CD14-positive monocyte (primary cell): ENCODE measurements at regions of chr4 and their contacts with region 1.

Region 1: GRCh38 chr4:146175541-146176453 is at the start of gene LSM6:
- DNase-seq: peak; percentile 61 to 79 (median 76)
- H3K4me3 ChIP-seq: peak within 1 kb of the TSS; percentile 78 to 99 (median 91)
- H3K4me3 Mint-ChIP-seq: peak within 1 kb of the TSS; percentile 92 to 93
- H3K27ac ChIP-seq: peak within 1 kb of the TSS; percentile 81 to 90
- H3K27ac Mint-ChIP-seq: peak within 1 kb of the TSS; percentile 77 to 91 (median 84)
- H3K4me1 ChIP-seq: peaks cover 17 to 33% of the 10 kb centered on the region in 2 donors
- H3K4me1 Mint-ChIP-seq: peaks cover 42% of the 10 kb centered on the region
- H3K27me3 ChIP-seq: no peaks in the 10 kb centered on the region
- H3K27me3 Mint-ChIP-seq: peaks cover 0 to 4% (median 2%) of the 10 kb centered on the region in 3 donors
- CTCF ChIP-seq: peak; percentile 8
- polyA plus RNA-seq, gene LSM6: 41.1 to 89.7 (median 66.2) TPM

Region 2: DNA sequence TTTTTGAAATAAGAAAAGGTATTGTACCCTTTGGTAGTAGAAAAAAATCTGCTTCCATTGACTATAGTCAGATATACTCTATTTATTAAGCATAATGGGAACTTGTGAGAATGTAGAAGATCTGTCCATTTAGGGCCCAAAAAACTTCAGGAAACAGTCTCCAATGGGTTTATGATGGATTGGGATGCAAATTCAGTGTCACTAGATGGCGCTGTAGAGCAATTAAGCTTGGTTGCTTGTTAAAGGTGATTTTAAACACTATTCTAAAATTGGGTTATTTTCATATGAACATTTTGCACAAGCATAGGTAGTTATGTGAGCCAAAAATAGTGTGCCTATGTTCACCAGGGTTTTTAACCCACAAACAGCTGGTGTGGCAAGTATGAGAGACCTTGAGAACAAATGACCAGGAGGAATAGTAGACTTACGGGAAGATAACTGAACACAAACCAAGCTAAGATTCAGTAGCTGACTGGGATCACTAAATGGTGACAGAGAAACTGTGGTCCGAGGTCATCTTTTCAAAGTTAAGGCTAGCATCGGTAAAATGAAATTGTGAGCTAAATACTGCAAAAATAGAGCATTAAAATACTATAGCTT is 80.6 kb before region 1 on chr4:
- intact Hi-C with region 1: loop called in 1 of 2 experiments (anchors 10 kb)
- DNase-seq: peak; percentile 42 to 75 (median 64)
- H3K4me3 ChIP-seq: no peak overlapping the region
- H3K4me3 Mint-ChIP-seq: no peak overlapping the region
- H3K27ac ChIP-seq: no peak overlapping the region
- H3K27ac Mint-ChIP-seq: no peak overlapping the region
- H3K4me1 ChIP-seq: no peaks in the 10 kb centered on the region
- H3K4me1 Mint-ChIP-seq: peaks cover 12% of the 10 kb centered on the region
- H3K27me3 ChIP-seq: peaks cover 0 to 5% of the 10 kb centered on the region in 2 donors
- H3K27me3 Mint-ChIP-seq: peaks cover 3 to 10% (median 9%) of the 10 kb centered on the region in 3 donors
- CTCF ChIP-seq: peak; percentile 96

Region 3: DNA sequence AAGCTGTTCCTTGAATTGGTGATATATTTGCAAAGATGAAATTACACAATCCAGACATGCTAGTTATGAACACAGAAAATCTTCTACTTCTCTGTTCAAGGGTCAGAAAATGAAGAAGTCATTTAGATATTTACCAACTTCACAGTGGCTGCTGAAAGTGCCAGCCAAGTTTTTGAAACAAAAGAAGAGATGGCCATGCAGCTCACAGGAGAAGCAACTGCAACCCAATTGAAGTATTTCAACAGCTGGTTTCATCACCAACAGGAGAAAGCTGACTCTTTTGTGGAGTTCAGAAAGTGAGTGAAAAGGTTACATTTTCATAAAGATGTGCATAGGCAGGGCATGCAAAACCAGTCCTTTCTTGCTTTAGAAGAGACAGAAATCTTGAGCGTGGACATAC is 70.3 kb before region 1 on chr4:
- intact Hi-C with region 1: loop called in 1 of 2 experiments (anchors 5 kb)
- DNase-seq: peak; percentile 84 to 90 (median 84)
- H3K4me3 ChIP-seq: peak overlapping the region in 1 of 3 experiments; percentile 51
- H3K4me3 Mint-ChIP-seq: peak overlapping the region; percentile 20 to 67
- H3K27ac ChIP-seq: peak overlapping the region; percentile 91 to 94
- H3K27ac Mint-ChIP-seq: peak overlapping the region; percentile 96 to 99 (median 97)
- H3K4me1 ChIP-seq: peaks cover 69 to 73% of the 10 kb centered on the region in 2 donors
- H3K4me1 Mint-ChIP-seq: peaks cover 63% of the 10 kb centered on the region
- H3K27me3 ChIP-seq: no peaks in the 10 kb centered on the region
- H3K27me3 Mint-ChIP-seq: peaks cover 0 to 2% (median 0%) of the 10 kb centered on the region in 3 donors
- CTCF ChIP-seq: no peak

Region 4: DNA sequence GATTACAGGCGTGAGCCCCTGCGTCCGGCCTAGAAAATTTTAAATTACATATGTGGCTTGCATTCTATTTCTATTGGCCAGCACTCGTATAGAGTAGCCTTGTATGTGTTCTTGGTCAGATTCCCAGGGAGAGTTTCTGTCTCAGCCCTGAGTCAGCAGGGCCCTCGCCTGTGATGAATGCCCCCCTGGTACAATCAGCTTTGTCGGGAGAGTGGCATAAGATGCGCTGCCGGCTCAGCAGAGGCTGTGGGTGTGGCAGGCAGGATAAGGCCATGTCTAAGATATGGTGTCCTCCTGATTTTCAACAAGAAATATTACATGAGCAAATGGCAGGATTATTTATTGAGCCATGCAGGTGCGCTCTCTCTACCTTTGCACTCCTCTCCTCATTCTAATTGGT is 37.0 kb after region 1 on chr4:
- intact Hi-C with region 1: no loop called
- DNase-seq: no peak
- H3K4me3 ChIP-seq: no peak overlapping the region
- H3K4me3 Mint-ChIP-seq: no peak overlapping the region
- H3K27ac ChIP-seq: no peak overlapping the region
- H3K27ac Mint-ChIP-seq: no peak overlapping the region
- H3K4me1 ChIP-seq: no peaks in the 10 kb centered on the region
- H3K4me1 Mint-ChIP-seq: no peaks in the 10 kb centered on the region
- H3K27me3 ChIP-seq: no peaks in the 10 kb centered on the region
- H3K27me3 Mint-ChIP-seq: peaks cover 0 to 13% (median 6%) of the 10 kb centered on the region in 3 donors
- CTCF ChIP-seq: no peak

Region 5: GRCh38 chr4:146522098-146522868 is 346.5 kb after region 1 on chr4:
- intact Hi-C with region 1: loop called in 1 of 2 experiments (anchors 5 kb)
- DNase-seq: peak; percentile 71 to 80 (median 79)
- H3K4me3 ChIP-seq: peak overlapping the region; percentile 59 to 99 (median 68)
- H3K4me3 Mint-ChIP-seq: no peak overlapping the region
- H3K27ac ChIP-seq: peak overlapping the region; percentile 44 to 94
- H3K27ac Mint-ChIP-seq: peak overlapping the region in 1 of 7 donors; percentile 68
- H3K4me1 ChIP-seq: peaks cover 11 to 30% of the 10 kb centered on the region in 2 donors
- H3K4me1 Mint-ChIP-seq: peaks cover 13% of the 10 kb centered on the region
- H3K27me3 ChIP-seq: no peaks in the 10 kb centered on the region
- H3K27me3 Mint-ChIP-seq: peaks cover 0 to 3% (median 0%) of the 10 kb centered on the region in 3 donors
- CTCF ChIP-seq: no peak